Right ventricle myocardium superior (tissue), 1 donor: ENCODE measurements at regions of chr2 and their contacts with region 1.

Region 1: GRCh38 chr2:174985630-174986029 is 19.6 kb downstream of the CHN1 start:
- DNase-seq: no peak
- ATAC-seq: no peak

Region 2: DNA sequence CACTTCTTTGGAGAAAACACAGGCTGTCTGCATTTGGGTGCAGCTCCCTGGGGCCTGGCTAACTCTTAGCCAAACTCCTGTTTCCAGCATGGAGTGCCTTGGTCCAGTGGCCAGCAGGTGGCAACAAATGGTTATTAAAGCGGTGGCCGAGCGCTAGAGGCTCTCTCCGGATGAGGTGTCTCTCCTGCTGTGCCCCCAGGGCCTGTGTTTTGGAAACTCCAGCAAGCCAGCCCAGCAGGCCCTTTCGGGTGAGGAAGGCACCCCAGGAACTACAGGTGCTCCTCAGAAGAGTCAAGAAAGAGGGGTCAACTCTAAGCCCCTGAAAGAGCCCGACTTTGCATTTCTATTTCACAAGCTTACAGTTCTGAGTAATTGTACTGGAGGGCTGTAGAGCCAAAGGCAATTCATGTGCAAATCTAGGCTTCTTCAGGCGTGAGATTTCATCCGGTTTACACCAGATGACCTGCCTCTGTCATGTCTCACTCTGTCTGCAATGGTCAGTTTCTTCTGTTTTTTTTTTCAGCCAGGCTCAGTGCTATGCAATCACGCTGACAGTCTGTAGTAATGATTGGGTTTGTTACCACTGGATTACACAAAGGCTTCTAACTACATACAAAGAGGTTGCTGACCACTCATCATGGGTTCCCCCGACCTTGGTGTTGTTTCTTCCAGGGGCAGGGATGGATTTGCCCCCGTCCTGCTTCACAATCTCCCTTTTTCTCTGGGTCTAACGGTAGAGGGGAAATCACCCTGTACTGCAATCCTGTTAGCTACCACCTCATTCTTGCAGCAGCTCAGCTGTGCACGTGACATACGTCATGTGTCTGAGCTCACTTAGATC is 213.8 kb before region 1 on chr2:
- intact Hi-C with region 1: loop called (anchors 2 kb)
- DNase-seq: peak; percentile 87
- ATAC-seq: peak; percentile 98